Brain microvascular endothelial cell (primary cell): ENCODE measurements at regions of chr11 and their contacts with region 1.

Region 1: GRCh38 chr11:118705111-118705741 is 25.8 kb upstream of the TREH start:
- DNase-seq: no peak
- H3K4me3 ChIP-seq: no peak overlapping the region
- H3K27ac ChIP-seq: no peak overlapping the region
- H3K27me3 ChIP-seq: no peaks in the 10 kb centered on the region
- CTCF ChIP-seq: no peak

Region 2: GRCh38 chr11:118485273-118485672 is 220.0 kb before region 1 on chr11:
- in situ Hi-C with region 1: no loop called
- DNase-seq: no peak
- H3K4me3 ChIP-seq: no peak overlapping the region
- H3K27ac ChIP-seq: no peak overlapping the region
- H3K27me3 ChIP-seq: no peaks in the 10 kb centered on the region
- CTCF ChIP-seq: peak; percentile 35

Region 3: DNA sequence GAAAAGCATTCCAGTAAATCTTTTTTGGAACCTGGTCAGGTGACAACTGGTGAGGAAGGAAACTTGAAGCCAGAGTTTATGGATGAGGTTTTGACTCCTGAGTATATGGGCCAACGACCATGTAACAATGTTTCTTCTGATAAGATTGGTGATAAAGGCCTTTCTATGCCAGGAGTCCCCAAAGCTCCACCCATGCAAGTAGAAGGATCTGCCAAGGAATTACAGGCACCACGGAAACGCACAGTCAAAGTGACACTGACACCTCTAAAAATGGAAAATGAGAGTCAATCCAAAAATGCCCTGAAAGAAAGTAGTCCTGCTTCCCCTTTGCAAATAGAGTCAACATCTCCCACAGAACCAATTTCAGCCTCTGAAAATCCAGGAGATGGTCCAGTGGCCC is 202.0 kb before region 1 on chr11:
- in situ Hi-C with region 1: no loop called
- DNase-seq: no peak
- H3K4me3 ChIP-seq: no peak overlapping the region
- H3K27ac ChIP-seq: no peak overlapping the region
- H3K27me3 ChIP-seq: no peaks in the 10 kb centered on the region
- CTCF ChIP-seq: no peak

Region 4: DNA sequence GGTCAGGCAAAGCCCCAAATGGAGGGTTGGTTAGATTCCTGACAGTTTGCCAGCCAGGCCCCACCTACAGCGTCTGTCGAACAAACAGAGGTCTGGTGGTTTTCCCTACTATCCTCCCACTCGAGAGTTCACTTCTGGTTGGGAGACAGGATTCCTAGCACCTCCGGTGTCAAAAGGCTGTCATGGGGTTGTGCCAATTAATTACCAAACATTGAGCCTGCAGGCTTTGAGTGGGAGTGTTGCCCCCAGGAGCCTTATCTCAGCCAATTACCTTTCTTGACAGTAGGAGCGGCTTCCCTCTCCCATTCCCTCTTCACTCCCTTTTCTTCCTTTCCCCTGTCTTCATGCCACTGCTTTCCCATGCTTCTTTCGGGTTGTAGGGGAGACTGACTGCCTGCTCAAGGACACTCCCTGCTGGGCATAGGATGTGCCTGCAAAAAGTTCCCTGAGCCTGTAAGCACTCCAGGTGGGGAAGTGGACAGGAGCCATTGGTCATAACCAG is 182.6 kb before region 1 on chr11:
- in situ Hi-C with region 1: no loop called
- DNase-seq: peak; percentile 14
- H3K4me3 ChIP-seq: no peak overlapping the region
- H3K27ac ChIP-seq: no peak overlapping the region
- H3K27me3 ChIP-seq: no peaks in the 10 kb centered on the region
- CTCF ChIP-seq: peak; percentile 73

Region 5: DNA sequence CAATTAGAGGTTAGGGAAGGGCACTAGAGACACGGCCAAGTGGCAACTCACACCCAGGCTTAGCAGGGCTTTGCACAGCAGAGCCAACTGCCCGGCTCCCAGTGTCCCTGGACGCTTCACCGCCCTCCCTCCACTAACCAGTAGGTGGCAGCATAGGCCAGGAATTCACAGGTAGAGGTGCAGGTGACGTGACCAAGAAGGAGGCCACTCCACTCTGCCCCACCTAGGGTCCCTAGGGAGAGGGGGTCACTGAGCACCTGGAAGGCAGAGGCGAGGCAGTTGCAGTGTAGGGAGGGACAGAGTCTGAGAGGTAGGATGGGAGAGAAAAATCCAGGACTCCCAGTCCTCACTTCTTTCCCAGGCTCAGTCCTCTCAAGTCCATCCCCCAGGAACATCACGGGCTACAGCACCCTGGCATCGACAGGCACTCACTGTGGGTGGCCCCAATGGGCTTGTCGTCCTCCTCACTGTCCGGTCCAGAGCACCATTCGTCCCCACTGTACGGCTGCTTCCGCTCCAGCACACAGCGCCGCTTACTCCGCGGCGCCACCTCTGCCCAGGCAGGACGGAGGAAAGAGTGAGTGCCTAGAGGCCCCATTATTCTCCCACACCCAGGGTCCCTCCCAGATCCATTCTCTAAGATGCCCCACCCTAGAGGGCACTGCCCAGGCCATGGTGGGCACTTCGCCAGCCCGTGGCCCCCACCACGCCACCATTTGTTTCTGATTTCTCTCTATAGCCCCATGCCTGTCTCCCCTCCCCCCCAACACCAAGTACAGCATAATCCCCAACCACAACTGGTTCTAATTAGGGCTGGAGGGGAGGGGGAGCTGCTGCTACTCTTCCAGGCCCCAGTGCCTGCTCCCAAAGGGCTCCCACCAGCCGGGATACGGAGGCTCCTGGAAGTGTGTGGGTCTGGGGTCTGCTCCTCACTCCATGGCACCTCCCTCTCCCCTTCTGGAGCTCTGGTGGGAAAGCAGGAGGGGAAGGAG is 202.1 kb after region 1 on chr11:
- in situ Hi-C with region 1: no loop called
- DNase-seq: no peak
- H3K4me3 ChIP-seq: no peak overlapping the region
- H3K27ac ChIP-seq: no peak overlapping the region
- H3K27me3 ChIP-seq: no peaks in the 10 kb centered on the region
- CTCF ChIP-seq: peak; percentile 92

Region 6: DNA sequence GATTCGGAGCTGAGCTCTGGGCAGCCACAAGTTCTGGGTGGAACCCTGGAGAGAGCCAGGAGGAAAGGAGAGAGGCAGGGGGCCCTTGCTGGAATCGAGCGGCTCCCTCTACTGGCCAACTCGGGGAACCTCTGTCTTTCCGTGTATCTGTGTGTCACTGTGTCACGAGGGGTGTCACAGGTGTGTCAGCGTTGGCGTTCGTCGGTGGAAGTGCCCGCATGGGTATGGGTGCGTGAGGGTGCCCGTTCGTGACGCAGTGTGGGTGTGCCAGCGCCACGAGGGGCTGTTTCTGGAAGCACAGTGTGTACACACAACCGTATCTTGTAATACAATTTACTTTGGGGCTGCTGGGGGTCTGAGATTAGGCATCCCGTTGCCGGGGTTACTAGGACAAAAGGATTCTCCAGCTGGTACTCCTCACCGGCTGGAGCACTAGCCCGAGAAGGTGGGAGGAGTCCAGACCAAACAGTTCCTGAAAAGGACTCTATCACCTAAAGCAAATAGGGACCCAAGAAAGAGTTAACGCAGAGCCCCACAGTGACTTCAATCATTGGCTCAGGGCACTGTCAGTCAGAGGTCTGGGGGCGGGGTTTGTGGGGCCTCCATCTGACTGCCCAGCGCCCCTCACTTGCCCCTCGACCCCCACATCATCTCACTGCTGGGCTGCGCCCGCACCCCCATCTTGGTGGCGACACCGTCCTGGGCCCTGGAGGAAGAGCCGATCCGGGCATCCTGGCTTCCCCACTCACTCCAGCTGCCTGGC is 223.1 kb after region 1 on chr11:
- in situ Hi-C with region 1: loop called (anchors 25 kb)
- DNase-seq: peak; percentile 86
- H3K4me3 ChIP-seq: peak overlapping the region; percentile 67
- H3K27ac ChIP-seq: peak overlapping the region; percentile 15
- H3K27me3 ChIP-seq: no peaks in the 10 kb centered on the region
- CTCF ChIP-seq: peak; percentile 97